Activated naive CD4-positive, alpha-beta T cell treated with anti-CD3 and anti-CD28 coated beads, Interleukin-2, amount 10 ng/mL, durations not matched to agents 7 days and 5 days (primary cell): ENCODE measurements at regions of chr7 and their contacts with region 1.

Region 1: DNA sequence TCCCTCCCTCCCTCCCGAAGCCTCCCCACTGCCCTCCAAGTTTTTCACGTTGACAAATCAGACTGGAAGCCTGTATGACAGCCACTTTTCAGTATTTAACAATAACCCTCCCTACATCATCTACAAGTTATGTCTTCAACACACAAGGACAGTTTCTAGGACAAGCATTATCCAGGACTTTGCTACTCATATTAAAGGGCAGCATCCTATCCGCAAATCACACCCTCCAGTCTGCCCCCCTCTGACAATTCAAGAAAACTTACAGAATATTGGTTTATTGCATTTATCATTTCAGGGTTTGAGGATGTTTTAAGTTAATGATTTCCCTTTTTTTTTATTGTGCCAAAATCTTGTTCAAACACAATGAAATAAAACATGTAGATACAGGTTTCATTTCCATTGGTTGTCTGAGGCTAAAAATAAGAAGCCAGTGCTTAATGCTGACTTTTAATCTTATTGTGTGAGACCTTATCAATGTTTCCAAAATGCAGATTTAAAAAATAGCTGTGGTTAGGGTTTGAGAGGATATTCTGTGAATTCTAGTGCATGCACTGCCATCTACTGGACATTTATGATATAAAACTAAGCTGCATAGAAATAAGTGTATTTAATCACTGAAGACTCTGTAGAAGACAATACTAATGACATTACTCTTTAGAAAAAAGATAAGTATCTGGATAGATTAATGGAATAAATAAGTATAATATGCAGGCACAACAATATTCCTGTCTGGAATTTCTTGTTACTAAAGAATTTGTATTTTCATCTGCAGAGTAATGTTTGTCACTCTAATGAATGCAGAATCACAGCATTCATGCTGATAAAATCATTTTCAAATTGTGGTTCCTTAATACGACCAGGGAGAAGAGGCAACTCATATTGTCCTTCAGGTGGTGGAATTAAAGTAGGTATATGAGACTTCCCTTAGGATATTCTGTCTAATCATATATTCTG is 64.1 kb downstream of the CAV1 start:
- DNase-seq: no peak
- H3K4me3 Mint-ChIP-seq: no peak overlapping the region
- H3K27ac Mint-ChIP-seq: no peak overlapping the region
- H3K4me1 Mint-ChIP-seq: peaks cover 22% of the 10 kb centered on the region
- H3K27me3 Mint-ChIP-seq: peaks cover 17% of the 10 kb centered on the region

Region 2: DNA sequence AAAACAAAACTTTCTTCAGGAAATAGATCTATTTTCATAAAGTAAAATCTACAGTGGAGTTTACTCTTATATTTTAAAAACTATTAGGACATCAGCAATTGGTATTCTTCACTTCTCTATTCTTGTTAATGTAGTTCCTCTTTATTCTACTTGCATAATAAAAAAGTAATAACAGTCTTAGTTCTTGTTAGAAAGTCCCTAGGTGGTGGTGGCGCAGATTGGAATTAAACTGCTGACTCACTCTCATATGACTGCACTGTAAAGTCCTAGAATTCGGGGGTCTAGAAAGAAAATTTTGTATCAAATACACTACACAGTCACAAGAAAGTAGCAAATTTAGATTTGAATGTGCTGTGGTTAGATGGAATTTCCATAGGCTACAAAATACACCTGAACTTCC is 423.2 kb before region 1 on chr7:
- CTCF ChIA-PET with region 1: interaction called, 26 read pairs
- DNase-seq: no peak
- H3K4me3 Mint-ChIP-seq: no peak overlapping the region
- H3K27ac Mint-ChIP-seq: no peak overlapping the region
- H3K4me1 Mint-ChIP-seq: peaks cover 21% of the 10 kb centered on the region
- H3K27me3 Mint-ChIP-seq: peaks cover 23% of the 10 kb centered on the region

Region 3: DNA sequence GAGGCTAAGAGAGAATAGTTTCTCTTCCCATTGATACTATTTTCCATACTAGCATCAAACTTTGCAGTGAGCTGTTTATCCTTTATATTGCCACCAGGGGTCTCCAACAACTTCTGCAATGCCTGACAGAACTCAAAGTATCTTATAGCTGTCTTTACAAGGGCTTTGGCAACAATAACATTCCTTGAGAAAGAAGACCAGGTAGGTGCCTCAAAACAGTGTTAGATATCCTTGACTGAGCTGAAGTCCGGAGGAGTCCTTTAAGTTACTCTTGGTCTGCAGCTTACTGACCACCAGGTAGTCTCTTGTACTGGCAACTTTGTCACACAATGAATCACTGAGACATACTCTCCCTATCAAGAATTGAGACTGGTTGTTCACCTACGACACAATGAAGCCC is 408.6 kb before region 1 on chr7:
- CTCF ChIA-PET with region 1: interaction called, 19 read pairs
- DNase-seq: peak; percentile 29
- H3K4me3 Mint-ChIP-seq: no peak overlapping the region
- H3K27ac Mint-ChIP-seq: no peak overlapping the region
- H3K4me1 Mint-ChIP-seq: peaks cover 10% of the 10 kb centered on the region
- H3K27me3 Mint-ChIP-seq: peaks cover 2% of the 10 kb centered on the region

Region 4: GRCh38 chr7:116525913-116526861 is 62.7 kb before region 1 on chr7:
- CTCF ChIA-PET with region 1: interaction called, 19 read pairs
- DNase-seq: peak; percentile 73
- H3K4me3 Mint-ChIP-seq: peak overlapping the region; percentile 72
- H3K27ac Mint-ChIP-seq: no peak overlapping the region
- H3K4me1 Mint-ChIP-seq: peaks cover 27% of the 10 kb centered on the region
- H3K27me3 Mint-ChIP-seq: peaks cover 76% of the 10 kb centered on the region

Region 5: GRCh38 chr7:116687801-116688201 is 98.9 kb after region 1 on chr7:
- CTCF ChIA-PET with region 1: no interaction called
- DNase-seq: no peak
- H3K4me3 Mint-ChIP-seq: no peak overlapping the region
- H3K27ac Mint-ChIP-seq: no peak overlapping the region
- H3K4me1 Mint-ChIP-seq: no peaks in the 10 kb centered on the region
- H3K27me3 Mint-ChIP-seq: peaks cover 27% of the 10 kb centered on the region

Region 6: GRCh38 chr7:116786791-116787443 is 198.0 kb after region 1 on chr7:
- CTCF ChIA-PET with region 1: interaction called, 41 read pairs
- DNase-seq: peak; percentile 24
- H3K4me3 Mint-ChIP-seq: no peak overlapping the region
- H3K27ac Mint-ChIP-seq: no peak overlapping the region
- H3K4me1 Mint-ChIP-seq: no peaks in the 10 kb centered on the region
- H3K27me3 Mint-ChIP-seq: no peaks in the 10 kb centered on the region